Activated naive CD4-positive, alpha-beta T cell treated with anti-CD3 and anti-CD28 coated beads, Interleukin-2, amount 10 ng/mL, durations not matched to agents 7 days and 5 days (primary cell): ENCODE measurements at regions of chr3 and their contacts with region 1.

Region 1: DNA sequence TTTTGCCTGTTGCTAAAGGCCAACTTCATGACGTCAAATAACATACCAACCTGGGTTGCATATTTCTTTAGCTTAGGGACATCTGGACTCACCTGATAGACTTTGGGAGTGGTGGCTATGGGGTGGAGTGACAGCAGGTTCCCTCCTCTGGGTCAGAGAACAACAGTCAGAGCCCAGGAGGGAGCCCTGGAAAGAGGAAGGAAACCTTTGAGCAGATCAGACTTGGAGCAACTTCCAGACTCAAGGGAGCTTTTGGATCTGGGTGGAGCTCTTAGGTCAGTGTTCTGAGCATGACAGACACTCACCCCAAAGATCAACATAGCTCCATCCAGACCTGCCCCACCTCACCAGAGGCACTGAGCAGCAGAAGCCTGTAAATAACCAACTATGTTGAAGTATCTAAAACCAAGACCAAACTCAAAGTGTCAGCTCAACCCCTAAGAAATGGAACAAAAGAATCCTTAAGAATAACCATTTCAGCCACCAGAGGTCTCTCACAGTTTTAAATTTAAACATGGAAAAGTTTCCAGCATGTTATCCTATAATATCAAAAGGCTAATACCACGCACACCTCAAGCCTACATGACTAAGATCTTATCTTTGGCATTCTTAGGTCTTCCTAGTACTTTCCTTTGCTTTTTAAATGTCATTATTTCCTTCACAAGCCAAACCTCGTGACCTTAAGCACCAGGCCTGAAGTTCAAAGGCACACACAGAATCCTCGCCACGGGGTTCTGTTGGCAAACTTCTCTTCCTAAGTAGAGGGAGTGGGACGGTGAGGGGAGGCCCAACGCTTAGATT is 56.4 kb downstream of the UMPS start:
- DNase-seq: no peak
- H3K4me3 Mint-ChIP-seq: no peak overlapping the region
- H3K27ac Mint-ChIP-seq: no peak overlapping the region
- H3K4me1 Mint-ChIP-seq: no peaks in the 10 kb centered on the region
- H3K27me3 Mint-ChIP-seq: peaks cover 20% of the 10 kb centered on the region

Region 2: DNA sequence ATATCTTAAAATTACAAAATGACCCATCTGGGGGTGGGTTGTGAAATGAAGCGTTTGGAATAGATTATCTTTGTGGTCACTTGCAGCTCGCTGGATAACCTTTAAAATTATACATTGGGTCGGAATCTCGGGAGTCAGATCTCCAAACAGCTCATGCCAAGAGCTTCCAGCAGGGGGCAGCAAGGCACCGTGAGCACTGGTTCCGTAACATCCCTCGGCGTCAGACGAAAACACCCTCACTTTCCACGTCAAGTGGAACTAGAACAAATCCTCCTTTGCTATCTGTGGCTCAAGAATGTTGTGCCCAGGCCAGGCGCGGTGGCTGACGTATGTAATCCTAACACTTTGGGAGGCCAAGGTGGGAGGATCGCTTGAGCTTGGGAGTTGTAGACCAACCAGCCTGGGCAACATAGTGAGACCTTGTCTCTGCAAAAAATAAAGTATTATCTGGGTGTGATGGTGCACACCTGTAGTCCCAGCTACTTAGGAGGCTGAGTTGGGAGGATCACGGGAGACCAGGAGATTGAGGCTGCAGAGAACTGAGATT is 25.3 kb before region 1 on chr3:
- CTCF ChIA-PET with region 1: interaction called, 16 read pairs
- DNase-seq: peak; percentile 84
- H3K4me3 Mint-ChIP-seq: no peak overlapping the region
- H3K27ac Mint-ChIP-seq: no peak overlapping the region
- H3K4me1 Mint-ChIP-seq: peaks cover 4% of the 10 kb centered on the region
- H3K27me3 Mint-ChIP-seq: peaks cover 13% of the 10 kb centered on the region